T-cell (primary cell): ENCODE measurements at regions of chr16 and their contacts with region 1.

Region 1: DNA sequence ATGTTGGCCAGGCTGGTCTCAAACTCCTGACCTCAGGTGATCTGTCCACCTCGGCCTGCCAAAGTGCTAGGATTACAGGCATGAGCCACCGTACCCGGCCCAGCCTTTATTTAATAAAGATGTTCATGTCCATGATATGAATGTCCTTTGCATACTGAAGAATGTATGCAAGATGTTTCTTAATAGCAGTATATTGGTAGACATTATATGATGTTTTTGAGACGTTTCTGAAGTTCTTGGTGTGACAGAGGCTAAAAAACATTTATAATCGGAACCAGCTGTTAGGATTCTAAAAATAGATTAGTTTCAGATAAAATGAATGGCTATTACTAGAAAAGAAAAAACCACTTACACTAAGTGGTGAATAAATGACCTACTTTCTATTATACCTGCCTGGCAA is 11.8 kb downstream of the PDZD9 start:
- DNase-seq: no peak
- ATAC-seq: no peak
- H3K4me3 ChIP-seq: no peak overlapping the region
- H3K4me3 Mint-ChIP-seq: no peak overlapping the region
- H3K27ac ChIP-seq: no peak overlapping the region
- H3K27ac Mint-ChIP-seq: no peak overlapping the region
- H3K4me1 ChIP-seq: peaks cover 2 to 4% of the 10 kb centered on the region in 2 experiments
- H3K4me1 Mint-ChIP-seq: peaks cover 9 to 28% (median 12%) of the 10 kb centered on the region in 3 donors
- H3K27me3 ChIP-seq: no peaks in the 10 kb centered on the region
- H3K27me3 Mint-ChIP-seq: no peaks in the 10 kb centered on the region

Region 2: DNA sequence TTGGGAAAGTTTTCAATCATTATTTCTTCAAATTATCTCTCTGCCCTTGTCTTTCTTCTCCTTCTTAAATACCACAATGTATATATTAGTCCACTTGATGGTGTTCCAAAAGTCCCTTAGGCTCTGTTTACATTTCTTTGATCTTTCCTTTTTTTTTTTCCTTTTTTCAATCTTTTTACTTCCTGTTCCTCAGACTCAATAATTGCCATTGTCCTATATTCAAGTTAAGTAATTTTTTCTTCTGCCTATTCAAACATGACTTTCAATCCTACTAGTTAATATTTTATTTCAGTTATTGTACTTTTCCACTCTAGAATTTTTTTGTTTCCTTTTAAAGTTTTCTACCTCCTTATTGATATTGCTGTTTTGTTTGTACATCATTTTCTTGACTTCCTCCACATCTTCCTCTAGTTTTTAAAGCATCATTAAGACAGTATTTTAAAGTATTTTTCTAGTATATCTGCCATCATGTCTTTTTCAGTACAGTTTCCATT is 51.8 kb before region 1 on chr16:
- CTCF ChIA-PET with region 1: interaction called, 3 to 11 read pairs
- POLR2A ChIA-PET with region 1: no interaction called
- DNase-seq: no peak
- ATAC-seq: no peak
- H3K4me3 ChIP-seq: no peak overlapping the region
- H3K4me3 Mint-ChIP-seq: no peak overlapping the region
- H3K27ac ChIP-seq: no peak overlapping the region
- H3K27ac Mint-ChIP-seq: no peak overlapping the region
- H3K4me1 ChIP-seq: peaks cover 2 to 6% of the 10 kb centered on the region in 2 experiments
- H3K4me1 Mint-ChIP-seq: peaks cover 8 to 14% (median 14%) of the 10 kb centered on the region in 3 donors
- H3K27me3 ChIP-seq: no peaks in the 10 kb centered on the region
- H3K27me3 Mint-ChIP-seq: no peaks in the 10 kb centered on the region

Region 3: DNA sequence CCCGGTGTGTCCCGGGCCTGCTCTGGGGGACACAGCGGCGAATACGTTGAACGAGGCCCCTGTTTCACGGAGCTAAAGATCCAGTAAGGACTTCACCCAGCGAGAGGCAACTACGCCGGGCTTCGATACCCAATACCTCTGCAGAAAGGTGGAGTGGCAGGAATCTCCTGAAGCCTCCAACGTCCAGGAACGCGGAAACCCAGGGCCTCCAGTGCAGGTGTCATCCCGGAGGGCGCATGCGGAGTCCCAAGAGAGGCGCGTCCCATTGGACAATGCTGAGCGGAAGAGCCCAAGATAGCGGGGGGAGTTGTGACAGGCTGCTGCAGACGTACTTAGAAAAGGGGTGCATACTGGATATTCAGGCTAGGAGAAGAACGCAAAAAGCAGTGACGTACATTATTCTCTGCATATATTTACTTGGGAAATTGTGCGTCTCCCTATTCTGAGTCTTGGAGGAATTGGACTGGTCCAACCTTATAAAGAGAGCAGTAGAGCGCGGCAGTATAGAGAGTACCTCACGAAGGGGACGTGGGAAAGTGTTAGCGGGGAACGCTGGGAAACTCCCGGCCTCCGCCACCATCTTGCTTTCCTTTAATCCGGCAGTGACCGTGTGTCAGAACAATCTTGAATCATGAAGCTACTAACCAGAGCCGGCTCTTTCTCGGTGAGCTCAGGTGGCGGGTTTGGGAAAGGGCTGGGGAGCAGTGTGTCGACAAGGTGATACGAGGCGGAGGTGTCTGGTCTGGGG is 36.2 kb before region 1 on chr16 and contains the start of gene UQCRC2:
- CTCF ChIA-PET with region 1: no interaction called
- POLR2A ChIA-PET with region 1: no interaction called
- DNase-seq: peak; percentile 75 to 94 (median 84)
- ATAC-seq: peak; percentile 91 to 95 (median 92)
- H3K4me3 ChIP-seq: peak within 1 kb of the TSS; percentile 95 to 98
- H3K4me3 Mint-ChIP-seq: peak within 1 kb of the TSS; percentile 97 to 99 (median 99)
- H3K27ac ChIP-seq: peak within 1 kb of the TSS; percentile 98
- H3K27ac Mint-ChIP-seq: peak within 1 kb of the TSS; percentile 98 to 100
- H3K4me1 ChIP-seq: peaks cover 28 to 34% of the 10 kb centered on the region in 2 experiments
- H3K4me1 Mint-ChIP-seq: peaks cover 52 to 72% (median 69%) of the 10 kb centered on the region in 3 donors
- H3K27me3 ChIP-seq: no peaks in the 10 kb centered on the region
- H3K27me3 Mint-ChIP-seq: no peaks in the 10 kb centered on the region
- total RNA-seq, gene UQCRC2: 142 to 201 (median 165) TPM

Region 4: DNA sequence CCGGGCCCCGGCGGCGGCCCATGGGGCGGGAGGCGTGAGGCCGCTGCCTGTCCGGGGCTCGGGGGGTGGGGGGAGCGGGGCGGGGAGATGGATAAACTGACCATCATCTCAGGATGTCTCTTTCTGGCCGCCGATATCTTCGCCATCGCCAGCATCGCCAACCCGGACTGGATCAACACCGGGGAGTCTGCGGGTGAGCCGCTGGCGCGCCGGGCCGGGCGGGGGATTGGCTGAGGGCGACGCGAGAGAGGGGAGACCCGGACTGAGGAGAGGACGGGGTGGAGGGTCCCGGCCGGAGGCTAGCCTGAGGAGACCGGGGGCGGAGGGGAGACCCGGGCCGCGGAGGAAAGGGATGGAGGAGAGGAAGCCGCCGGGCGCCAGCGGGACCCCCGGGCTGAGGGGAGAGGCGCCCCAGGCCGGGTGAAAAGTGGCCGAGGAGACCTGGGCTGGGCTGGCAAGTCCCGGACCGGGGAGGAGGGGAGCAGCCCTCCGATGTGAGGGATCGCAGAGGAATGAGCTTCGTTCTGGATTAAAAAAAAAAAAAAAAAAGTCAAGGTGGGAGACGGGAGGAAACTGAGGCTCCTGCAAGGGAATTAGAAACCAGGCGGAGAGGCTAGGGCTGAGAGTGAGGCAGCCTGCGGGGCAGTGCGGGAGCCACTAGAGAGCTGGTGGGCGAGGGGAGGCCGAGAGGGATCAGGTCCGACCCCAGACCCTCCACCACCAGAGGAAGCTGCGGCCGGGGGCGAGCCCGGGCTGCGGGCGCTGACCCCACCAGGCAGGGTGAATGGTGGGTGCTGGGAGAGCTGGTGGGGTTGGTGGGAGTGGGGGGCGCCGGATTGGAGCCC is 19.3 kb after region 1 on chr16:
- CTCF ChIA-PET with region 1: no interaction called
- POLR2A ChIA-PET with region 1: no interaction called
- DNase-seq: peak in 13 of 35 experiments; percentile 4 to 32 (median 16)
- ATAC-seq: peak; percentile 21 to 46 (median 32)
- H3K4me3 ChIP-seq: peak overlapping the region; percentile 83 to 89
- H3K4me3 Mint-ChIP-seq: peak overlapping the region; percentile 83 to 97 (median 83)
- H3K27ac ChIP-seq: no peak overlapping the region
- H3K27ac Mint-ChIP-seq: peak overlapping the region in 1 of 2 donors; percentile 72
- H3K4me1 ChIP-seq: peaks cover 14 to 20% of the 10 kb centered on the region in 2 experiments
- H3K4me1 Mint-ChIP-seq: peaks cover 50 to 56% (median 52%) of the 10 kb centered on the region in 3 donors
- H3K27me3 ChIP-seq: no peaks in the 10 kb centered on the region
- H3K27me3 Mint-ChIP-seq: no peaks in the 10 kb centered on the region

Region 5: GRCh38 chr16:22424161-22424937 is 435.2 kb after region 1 on chr16:
- CTCF ChIA-PET with region 1: no interaction called
- POLR2A ChIA-PET with region 1: no interaction called
- DNase-seq: no peak
- ATAC-seq: no peak
- H3K4me3 ChIP-seq: no peak overlapping the region
- H3K4me3 Mint-ChIP-seq: no peak overlapping the region
- H3K27ac ChIP-seq: no peak overlapping the region
- H3K27ac Mint-ChIP-seq: no peak overlapping the region
- H3K4me1 ChIP-seq: no peaks in the 10 kb centered on the region
- H3K4me1 Mint-ChIP-seq: no peaks in the 10 kb centered on the region
- H3K27me3 ChIP-seq: no peaks in the 10 kb centered on the region
- H3K27me3 Mint-ChIP-seq: no peaks in the 10 kb centered on the region